ENCODE measurements at regions of chr12 and their contacts with region 1.

Region 1: DNA sequence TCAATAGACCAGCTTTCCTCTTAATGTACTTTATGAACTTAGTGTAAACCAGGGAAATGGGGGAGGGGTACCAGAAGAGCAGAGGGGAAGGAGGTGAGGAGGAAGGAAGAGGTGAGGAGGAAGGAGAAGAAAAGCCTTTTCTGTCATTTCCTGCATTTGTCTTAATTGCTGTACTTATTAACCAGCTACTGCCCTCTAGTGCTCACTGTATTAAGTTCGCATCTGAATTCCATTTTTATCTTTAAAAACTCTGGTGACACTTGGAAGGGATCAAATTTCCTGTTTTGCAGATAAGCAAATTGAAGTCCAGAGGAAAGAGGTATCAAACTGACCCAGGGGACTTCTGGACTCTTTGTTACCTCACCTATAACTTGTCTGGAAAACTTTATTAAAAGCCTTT is 22.2 kb downstream of the MANSC1 start:
- DNase-seq: peak; percentile 61
- H3K4me3 ChIP-seq: no peak overlapping the region
- CTCF ChIP-seq: peak; percentile 55

Region 2: GRCh38 chr12:12224240-12224940 is 103.4 kb before region 1 on chr12:
- in situ Hi-C with region 1: loop called (anchors 5 kb)
- DNase-seq: no peak
- H3K4me3 ChIP-seq: no peak overlapping the region
- CTCF ChIP-seq: no peak

Region 3: GRCh38 chr12:12266873-12267741 is 60.7 kb before region 1 on chr12 and contains the start of gene LRP6:
- in situ Hi-C with region 1: loop called (anchors 10 kb)
- DNase-seq: peak; percentile 89
- H3K4me3 ChIP-seq: peak within 1 kb of the TSS; percentile 63
- CTCF ChIP-seq: no peak